ENCODE measurements at regions of chr15 and their contacts with region 1.

Region 1: GRCh38 chr15:88904624-88905327 is 8.4 kb downstream of the MFGE8 start:
- DNase-seq: peak; percentile 81 to 84
- H3K4me3 ChIP-seq: no peak overlapping the region
- H3K27ac ChIP-seq: peak overlapping the region; percentile 11 to 62
- H3K4me1 ChIP-seq: peaks cover 11 to 35% of the 10 kb centered on the region in 2 donors
- H3K27me3 ChIP-seq: no peaks in the 10 kb centered on the region
- CTCF ChIP-seq: peak; percentile 95 to 98 (median 97)
- POLR2A ChIP-seq: no peak

Region 2: GRCh38 chr15:88620995-88621772 is 283.6 kb before region 1 on chr15 and contains the start of gene AEN:
- intact Hi-C with region 1: loop called (anchors 10 kb)
- DNase-seq: peak; percentile 93 to 96
- H3K4me3 ChIP-seq: peak within 1 kb of the TSS; percentile 64 to 92
- H3K27ac ChIP-seq: peak within 1 kb of the TSS; percentile 86 to 93
- H3K4me1 ChIP-seq: peaks cover 0 to 4% of the 10 kb centered on the region in 2 donors
- H3K27me3 ChIP-seq: no peaks in the 10 kb centered on the region
- CTCF ChIP-seq: peak in 2 of 4 experiments; percentile 26 to 34
- POLR2A ChIP-seq: peak; percentile 31 to 51
- total RNA-seq, gene AEN: 1.0 to 20.2 (median 6.0) TPM

Region 3: GRCh38 chr15:89017370-89018066 is 112.7 kb after region 1 on chr15:
- intact Hi-C with region 1: loop called (anchors 5 kb)
- DNase-seq: peak; percentile 81 to 82
- H3K4me3 ChIP-seq: peak overlapping the region; percentile 1 to 25
- H3K27ac ChIP-seq: peak overlapping the region; percentile 73 to 94
- H3K4me1 ChIP-seq: no peaks in the 10 kb centered on the region
- H3K27me3 ChIP-seq: no peaks in the 10 kb centered on the region
- CTCF ChIP-seq: peak; percentile 69 to 81 (median 76)
- POLR2A ChIP-seq: no peak

Region 4: GRCh38 chr15:89177633-89178306 is 273.0 kb after region 1 on chr15:
- intact Hi-C with region 1: loop called (anchors 10 kb)
- DNase-seq: peak; percentile 64 to 70
- H3K4me3 ChIP-seq: no peak overlapping the region
- H3K27ac ChIP-seq: peak overlapping the region; percentile 20 to 24
- H3K4me1 ChIP-seq: no peaks in the 10 kb centered on the region
- H3K27me3 ChIP-seq: no peaks in the 10 kb centered on the region
- CTCF ChIP-seq: peak; percentile 79 to 92 (median 86)
- POLR2A ChIP-seq: no peak

Measured in uterus (tissue), 4 donors.